Endothelial cell of umbilical vein (primary cell): ENCODE measurements at regions of chr4 and their contacts with region 1.

Region 1: DNA sequence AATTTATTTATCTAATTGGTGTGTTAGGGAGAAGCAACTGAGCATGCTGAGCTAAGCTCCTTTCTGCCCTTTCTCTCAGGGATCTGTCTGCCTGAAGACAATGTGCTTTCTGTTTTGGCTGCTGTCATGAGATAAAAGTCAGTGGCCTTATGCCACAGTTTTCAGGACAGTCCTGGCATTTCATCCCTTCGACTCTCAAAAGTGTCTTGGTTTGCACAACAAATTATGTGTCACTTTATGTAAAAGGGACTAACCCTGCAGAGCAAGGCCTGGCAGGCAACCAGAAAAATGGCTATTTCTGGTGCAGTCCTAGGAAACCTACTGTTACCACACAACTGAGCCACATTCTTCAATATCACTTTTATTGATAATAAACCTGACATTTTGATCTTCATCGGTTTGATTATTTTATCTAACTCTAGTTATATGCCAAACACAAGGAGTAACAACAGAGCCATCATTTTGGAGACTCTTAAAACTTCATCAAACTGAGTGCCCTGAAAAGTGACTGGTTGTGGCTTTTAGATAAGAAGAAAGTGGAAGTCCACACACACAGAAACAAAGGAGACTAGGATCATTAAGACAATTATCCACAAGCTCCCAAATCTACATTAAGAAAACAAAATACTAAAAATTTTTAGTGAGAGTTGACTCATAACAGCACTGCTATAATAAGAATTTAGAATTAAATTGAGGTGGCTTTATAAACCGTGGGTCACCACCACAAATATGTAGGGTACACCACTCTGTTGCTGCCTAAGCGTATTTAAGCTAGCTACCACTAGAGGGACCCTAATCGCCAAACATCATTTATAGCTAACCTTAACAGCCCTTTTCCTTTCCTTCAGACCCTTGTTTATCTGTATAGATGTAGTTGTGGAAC is 95.9 kb upstream of the PTPN13 start:
- DNase-seq: peak; percentile 56
- H3K4me3 ChIP-seq: no peak overlapping the region
- H3K27ac ChIP-seq: no peak overlapping the region
- H3K4me1 ChIP-seq: no peaks in the 10 kb centered on the region
- H3K27me3 ChIP-seq: no peaks in the 10 kb centered on the region
- CTCF ChIP-seq: peak; percentile 58 to 76
- POLR2A ChIP-seq: no peak

Region 2: GRCh38 chr4:86330961-86331742 is 167.1 kb before region 1 on chr4:
- CTCF ChIA-PET with region 1: no interaction called
- POLR2A ChIA-PET with region 1: no interaction called
- dilution Hi-C with region 1: no loop called
- intact Hi-C with region 1: no loop called
- DNase-seq: peak; percentile 8
- H3K4me3 ChIP-seq: no peak overlapping the region
- H3K27ac ChIP-seq: no peak overlapping the region
- H3K4me1 ChIP-seq: no peaks in the 10 kb centered on the region
- H3K27me3 ChIP-seq: no peaks in the 10 kb centered on the region
- CTCF ChIP-seq: no peak
- POLR2A ChIP-seq: no peak

Region 3: GRCh38 chr4:86482311-86483172 is 15.7 kb before region 1 on chr4:
- CTCF ChIA-PET with region 1: interaction called, 12 read pairs
- POLR2A ChIA-PET with region 1: no interaction called
- dilution Hi-C with region 1: no loop called
- intact Hi-C with region 1: no loop called
- DNase-seq: no peak
- H3K4me3 ChIP-seq: no peak overlapping the region
- H3K27ac ChIP-seq: no peak overlapping the region
- H3K4me1 ChIP-seq: no peaks in the 10 kb centered on the region
- H3K27me3 ChIP-seq: peaks cover 0 to 2% of the 10 kb centered on the region in 2 experiments
- CTCF ChIP-seq: no peak
- POLR2A ChIP-seq: no peak

Region 4: GRCh38 chr4:86508436-86508835 is 10.2 kb after region 1 on chr4:
- CTCF ChIA-PET with region 1: interaction called, 15 read pairs
- POLR2A ChIA-PET with region 1: no interaction called
- dilution Hi-C with region 1: no loop called
- intact Hi-C with region 1: no loop called
- DNase-seq: no peak
- H3K4me3 ChIP-seq: no peak overlapping the region
- H3K27ac ChIP-seq: no peak overlapping the region
- H3K4me1 ChIP-seq: no peaks in the 10 kb centered on the region
- H3K27me3 ChIP-seq: peaks cover 0 to 2% of the 10 kb centered on the region in 2 experiments
- CTCF ChIP-seq: no peak
- POLR2A ChIP-seq: no peak

Region 5: GRCh38 chr4:86593688-86594558 is 95.7 kb after region 1 on chr4 and contains the start of gene PTPN13:
- CTCF ChIA-PET with region 1: interaction called, 6 read pairs
- POLR2A ChIA-PET with region 1: no interaction called
- dilution Hi-C with region 1: no loop called
- intact Hi-C with region 1: loop called (anchors 2 kb)
- DNase-seq: peak; percentile 98
- H3K4me3 ChIP-seq: peak within 1 kb of the TSS; percentile 38 to 83 (median 70)
- H3K27ac ChIP-seq: no peak within 1 kb of the TSS
- H3K4me1 ChIP-seq: peaks cover 12% of the 10 kb centered on the region
- H3K27me3 ChIP-seq: no peaks in the 10 kb centered on the region
- CTCF ChIP-seq: no peak
- POLR2A ChIP-seq: peak; percentile 43
- total RNA-seq, gene PTPN13: 2.2 and 2.9 TPM in 2 replicates

Region 6: GRCh38 chr4:86816501-86817273 is 318.5 kb after region 1 on chr4:
- CTCF ChIA-PET with region 1: interaction called, 6 read pairs
- POLR2A ChIA-PET with region 1: no interaction called
- dilution Hi-C with region 1: no loop called
- intact Hi-C with region 1: loop called (anchors 5 kb)
- DNase-seq: no peak
- H3K4me3 ChIP-seq: no peak overlapping the region
- H3K27ac ChIP-seq: no peak overlapping the region
- H3K4me1 ChIP-seq: peaks cover 7% of the 10 kb centered on the region
- H3K27me3 ChIP-seq: no peaks in the 10 kb centered on the region
- CTCF ChIP-seq: no peak
- POLR2A ChIP-seq: no peak

Region 7: DNA sequence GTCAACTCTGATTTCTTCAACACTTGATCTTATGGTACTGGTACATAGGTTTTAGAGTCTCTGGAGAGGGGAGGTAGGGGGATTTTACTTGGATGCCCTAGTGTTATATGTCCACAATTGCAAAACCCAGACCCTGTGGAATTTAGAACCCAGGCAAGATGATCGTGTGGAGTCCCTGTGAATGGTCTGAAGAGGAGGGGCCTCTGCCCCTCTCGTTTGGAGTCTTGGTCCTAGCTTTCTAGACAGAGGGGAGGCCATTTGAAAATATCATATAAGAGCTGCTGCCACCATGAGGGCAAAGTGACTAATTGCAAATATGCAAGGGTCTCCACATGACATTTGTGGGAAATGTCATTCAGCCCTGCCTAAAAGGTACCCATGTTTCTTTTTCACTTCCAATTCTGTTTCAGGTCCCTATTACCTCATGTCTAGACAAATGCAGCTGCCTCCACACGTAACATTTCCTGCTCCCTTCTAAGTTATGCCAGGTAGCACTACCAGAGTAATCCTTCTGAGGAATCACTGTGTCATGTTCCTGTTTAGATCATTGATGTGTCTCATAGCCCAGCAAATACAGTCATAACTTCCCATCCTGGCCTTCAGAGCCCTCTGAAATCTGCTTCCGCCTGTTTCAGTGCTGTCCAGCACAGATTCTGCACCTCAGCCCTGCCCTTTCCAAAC is 595.4 kb after region 1 on chr4:
- CTCF ChIA-PET with region 1: interaction called, 8 read pairs
- POLR2A ChIA-PET with region 1: no interaction called
- dilution Hi-C with region 1: no loop called
- intact Hi-C with region 1: loop called (anchors 5 kb)
- DNase-seq: peak; percentile 70
- H3K4me3 ChIP-seq: no peak overlapping the region
- H3K27ac ChIP-seq: peak overlapping the region; percentile 68
- H3K4me1 ChIP-seq: peaks cover 33% of the 10 kb centered on the region
- H3K27me3 ChIP-seq: no peaks in the 10 kb centered on the region
- CTCF ChIP-seq: peak; percentile 35 to 58
- POLR2A ChIP-seq: no peak